AG04450 (cell line): ENCODE measurements at regions of chr20 and their contacts with region 1.

Region 1: DNA sequence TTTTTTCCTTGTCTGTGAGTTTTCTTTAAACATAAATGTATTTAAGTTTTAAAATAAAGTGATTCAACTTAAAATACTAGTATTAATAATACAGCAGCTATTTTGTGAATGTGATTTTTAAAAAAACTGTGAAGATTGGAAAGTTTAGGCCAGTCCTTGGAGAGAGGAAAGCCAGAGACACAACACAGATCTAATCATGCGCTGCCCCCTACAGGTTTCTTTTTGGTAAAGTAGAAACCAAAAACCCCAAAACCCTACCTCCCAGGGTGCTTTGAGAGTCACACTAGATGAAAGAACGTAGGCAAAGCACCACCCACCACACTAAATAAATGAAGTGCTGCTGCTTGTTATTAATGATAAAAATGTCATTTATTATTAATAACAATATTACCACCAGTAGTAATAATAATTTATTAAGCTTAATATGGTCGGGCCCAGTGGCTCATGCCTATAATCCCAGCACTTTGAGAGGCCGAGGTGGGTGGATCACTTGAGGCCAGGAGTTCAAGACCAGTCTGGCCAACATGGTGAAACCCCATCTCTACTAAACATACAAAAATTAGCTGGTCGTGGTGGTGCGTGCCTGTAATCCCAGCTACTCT is 33.7 kb downstream of the SLC9A8 start:
- DNase-seq: no peak
- H3K4me3 ChIP-seq: no peak overlapping the region
- H3K27ac ChIP-seq: no peak overlapping the region
- H3K27me3 ChIP-seq: no peaks in the 10 kb centered on the region
- CTCF ChIP-seq: peak; percentile 65

Region 2: GRCh38 chr20:49610701-49611538 is 235.4 kb before region 1 on chr20:
- CTCF ChIA-PET with region 1: interaction called, 158 read pairs
- POLR2A ChIA-PET with region 1: interaction called, 3 read pairs
- DNase-seq: no peak
- H3K4me3 ChIP-seq: peak overlapping the region; percentile 29
- H3K27ac ChIP-seq: no peak overlapping the region
- H3K27me3 ChIP-seq: peaks cover 9% of the 10 kb centered on the region
- CTCF ChIP-seq: peak; percentile 99

Region 3: GRCh38 chr20:49646131-49646927 is 200.0 kb before region 1 on chr20:
- CTCF ChIA-PET with region 1: interaction called, 14 read pairs
- POLR2A ChIA-PET with region 1: no interaction called
- DNase-seq: peak; percentile 42
- H3K4me3 ChIP-seq: no peak overlapping the region
- H3K27ac ChIP-seq: peak overlapping the region; percentile 58
- H3K27me3 ChIP-seq: no peaks in the 10 kb centered on the region
- CTCF ChIP-seq: no peak

Region 4: DNA sequence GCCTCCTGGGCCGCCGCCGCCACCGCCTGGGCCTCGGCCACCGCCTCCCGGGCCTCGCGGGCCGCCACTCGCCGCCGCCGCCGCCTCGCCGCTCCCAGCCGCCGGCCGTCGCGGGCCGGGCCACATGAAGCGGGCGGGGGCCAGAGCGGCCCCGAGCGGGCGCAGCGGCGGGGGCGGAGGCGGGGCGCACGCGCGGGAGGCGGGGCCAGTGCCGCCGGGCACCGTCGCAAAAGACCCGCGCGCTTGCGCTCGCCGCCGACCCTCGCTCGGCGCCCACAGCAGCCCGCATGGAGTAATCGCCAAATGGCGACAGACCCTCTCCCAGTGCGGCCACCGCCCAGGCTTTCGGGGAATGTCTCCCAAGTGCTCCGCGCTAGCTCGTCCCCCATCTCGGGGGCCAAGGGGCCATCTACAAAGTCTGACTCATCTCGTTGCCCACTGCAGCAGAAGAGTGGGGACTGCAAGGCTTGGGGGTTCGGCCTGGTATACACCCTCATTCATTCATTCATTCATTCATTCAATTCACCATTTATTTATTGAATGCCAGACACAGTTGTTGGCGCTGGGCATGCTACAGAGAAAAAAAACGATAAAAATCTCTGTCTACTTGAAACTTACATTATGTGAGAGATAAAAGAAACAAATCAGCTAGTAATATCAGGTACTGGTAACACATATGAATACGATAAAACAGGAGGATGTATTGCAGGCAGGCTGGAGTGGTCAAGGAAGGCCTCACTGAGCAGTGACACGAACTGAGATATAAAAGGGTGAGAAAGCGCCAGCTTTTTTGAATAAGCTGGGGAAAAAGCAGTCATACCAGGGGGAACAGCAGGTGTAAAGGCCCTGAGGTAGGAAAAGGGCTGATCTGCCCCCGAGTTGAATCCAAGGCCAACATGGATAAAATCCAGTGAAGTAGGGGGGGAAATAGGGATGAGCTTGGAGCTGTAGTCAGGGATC is 132.3 kb before region 1 on chr20 and contains the start of gene B4GALT5:
- CTCF ChIA-PET with region 1: no interaction called
- POLR2A ChIA-PET with region 1: no interaction called
- DNase-seq: peak; percentile 48
- H3K4me3 ChIP-seq: peak within 1 kb of the TSS; percentile 81
- H3K27ac ChIP-seq: peak within 1 kb of the TSS; percentile 47
- H3K27me3 ChIP-seq: no peaks in the 10 kb centered on the region
- CTCF ChIP-seq: no peak
- polyA plus RNA-seq, gene B4GALT5: 28.0 and 32.5 TPM in 2 replicates

Region 5: GRCh38 chr20:49821870-49822331 is 24.4 kb before region 1 on chr20:
- CTCF ChIA-PET with region 1: interaction called, 43 read pairs
- POLR2A ChIA-PET with region 1: no interaction called
- DNase-seq: no peak
- H3K4me3 ChIP-seq: no peak overlapping the region
- H3K27ac ChIP-seq: no peak overlapping the region
- H3K27me3 ChIP-seq: no peaks in the 10 kb centered on the region
- CTCF ChIP-seq: peak; percentile 56

Region 6: DNA sequence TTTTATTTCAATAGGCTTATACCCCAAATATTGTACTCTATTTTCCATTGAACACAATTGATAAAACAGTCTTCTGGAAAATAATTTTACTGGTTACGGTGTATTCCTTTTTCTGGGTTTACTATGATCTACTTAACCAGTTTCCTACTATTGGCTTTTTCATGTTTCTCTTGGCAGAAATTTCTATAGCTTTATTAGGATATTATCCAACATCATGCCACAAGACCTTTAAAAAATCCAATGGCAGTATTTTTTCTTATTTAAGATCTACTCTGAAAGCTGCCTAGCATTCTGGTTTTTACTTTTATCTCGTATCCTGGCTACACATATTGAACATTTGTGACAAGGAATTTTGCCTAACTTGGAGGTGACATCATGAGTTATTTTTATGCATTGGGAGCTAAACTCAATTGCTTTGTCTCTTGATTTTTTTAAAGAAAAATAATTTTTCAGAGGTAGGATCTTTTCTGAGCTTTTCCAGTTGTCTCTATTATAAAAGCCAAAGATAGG is 11.8 kb after region 1 on chr20:
- CTCF ChIA-PET with region 1: interaction called, 14 read pairs
- POLR2A ChIA-PET with region 1: no interaction called
- DNase-seq: no peak
- H3K4me3 ChIP-seq: no peak overlapping the region
- H3K27ac ChIP-seq: no peak overlapping the region
- H3K27me3 ChIP-seq: no peaks in the 10 kb centered on the region
- CTCF ChIP-seq: no peak

Region 7: GRCh38 chr20:49915378-49916145 is 69.3 kb after region 1 on chr20 and contains the start of gene SPATA2:
- CTCF ChIA-PET with region 1: no interaction called
- POLR2A ChIA-PET with region 1: no interaction called
- DNase-seq: peak; percentile 88
- H3K4me3 ChIP-seq: peak within 1 kb of the TSS; percentile 98
- H3K27ac ChIP-seq: peak within 1 kb of the TSS; percentile 100
- H3K27me3 ChIP-seq: no peaks in the 10 kb centered on the region
- CTCF ChIP-seq: no peak
- polyA plus RNA-seq, gene SPATA2: 4.3 and 4.7 TPM in 2 replicates

Region 8: DNA sequence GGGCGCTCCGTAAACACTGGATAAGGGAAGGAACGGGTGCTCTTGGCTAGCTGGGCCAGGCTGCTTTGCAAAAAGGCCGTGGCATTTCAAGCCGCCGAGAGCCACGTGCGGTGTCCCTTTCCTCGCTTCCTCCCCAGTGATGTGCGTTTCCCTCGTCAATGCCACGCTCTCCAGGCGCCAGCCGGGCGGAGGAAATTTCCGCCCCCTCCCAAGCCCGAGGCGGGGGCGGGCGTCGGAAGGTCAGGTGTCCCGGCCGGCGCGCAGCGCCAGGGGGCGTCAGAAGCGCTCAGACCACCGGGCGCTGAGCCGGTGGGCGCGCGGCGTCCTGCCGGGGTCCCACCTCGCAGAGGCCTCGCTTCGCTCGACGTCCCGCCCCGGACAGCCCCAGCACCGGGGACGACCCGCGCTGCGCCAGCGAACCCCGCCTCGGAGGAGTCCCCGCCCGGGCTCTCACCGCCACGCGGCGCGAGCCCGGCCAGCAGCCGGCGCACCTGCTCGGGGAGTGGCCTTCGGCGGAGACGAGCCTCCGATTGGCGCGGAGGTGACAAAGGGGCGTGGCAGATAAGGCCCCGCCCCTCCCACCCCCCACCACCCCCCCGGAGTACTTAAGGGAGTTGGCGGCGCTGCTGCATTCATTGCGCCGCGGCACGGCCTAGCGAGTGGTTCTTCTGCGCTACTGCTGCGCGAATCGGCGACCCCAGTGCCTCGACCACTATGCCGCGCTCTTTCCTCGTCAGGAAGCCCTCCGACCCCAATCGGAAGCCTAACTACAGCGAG is 136.2 kb after region 1 on chr20 and contains the start of gene SNAI1:
- CTCF ChIA-PET with region 1: no interaction called
- POLR2A ChIA-PET with region 1: no interaction called
- DNase-seq: peak; percentile 73
- H3K4me3 ChIP-seq: peak within 1 kb of the TSS; percentile 93
- H3K27ac ChIP-seq: peak within 1 kb of the TSS; percentile 39
- H3K27me3 ChIP-seq: peaks cover 6% of the 10 kb centered on the region
- CTCF ChIP-seq: peak; percentile 45
- polyA plus RNA-seq, gene SNAI1: 2.3 and 3.5 TPM in 2 replicates

Region 9: GRCh38 chr20:50292324-50293243 is 446.3 kb after region 1 on chr20:
- CTCF ChIA-PET with region 1: no interaction called
- POLR2A ChIA-PET with region 1: no interaction called
- DNase-seq: peak; percentile 93
- H3K4me3 ChIP-seq: no peak overlapping the region
- H3K27ac ChIP-seq: peak overlapping the region; percentile 95
- H3K27me3 ChIP-seq: no peaks in the 10 kb centered on the region
- CTCF ChIP-seq: no peak